Colonic mucosa (tissue), 4 donors: ENCODE measurements at regions of chr1 and their contacts with region 1.

Region 1: DNA sequence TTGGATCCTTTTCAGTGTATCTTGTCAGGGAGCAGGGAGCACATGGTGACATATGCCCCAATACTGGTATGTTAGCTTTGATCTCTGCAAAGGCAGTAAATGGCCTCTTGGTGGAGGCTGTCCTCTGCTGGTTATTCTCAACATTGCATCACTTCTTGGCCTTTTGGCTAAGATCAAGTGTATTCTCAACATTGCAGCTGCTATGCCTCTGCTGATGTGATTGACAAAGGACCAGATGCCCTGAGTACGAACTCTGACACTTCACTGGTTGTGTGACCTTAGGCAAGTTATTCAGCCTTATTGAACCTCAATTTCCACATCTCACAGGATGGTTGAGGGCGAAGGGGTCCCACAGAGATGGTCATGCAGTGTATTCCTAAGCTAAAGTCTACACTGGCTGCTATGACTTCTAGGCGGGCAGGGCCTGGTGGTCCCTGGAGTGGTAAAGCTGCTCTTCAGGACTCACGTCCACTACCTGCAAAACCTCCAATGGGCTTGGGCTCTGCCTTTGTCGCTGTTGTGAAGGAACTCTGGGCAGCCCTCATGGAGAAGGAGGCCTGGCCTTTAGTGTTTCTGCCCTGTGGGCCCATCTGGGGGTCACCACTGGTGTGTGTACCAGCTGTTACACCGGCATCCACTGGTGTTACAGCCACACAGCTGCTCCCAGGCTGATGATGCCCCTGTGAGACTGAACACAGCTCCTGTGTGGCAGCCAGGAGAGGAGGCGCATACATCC is 64.8 kb downstream of the DNTTIP2 start:
- DNase-seq: peak; percentile 69
- H3K4me3 ChIP-seq: no peak overlapping the region
- H3K27ac ChIP-seq: no peak overlapping the region
- H3K4me1 ChIP-seq: no peaks in the 10 kb centered on the region
- H3K27me3 ChIP-seq: no peaks in the 10 kb centered on the region
- CTCF ChIP-seq: peak; percentile 93

Region 2: GRCh38 chr1:93437976-93438605 is 376.1 kb before region 1 on chr1:
- intact Hi-C with region 1: loop called (anchors 5 kb)
- DNase-seq: no peak
- H3K4me3 ChIP-seq: no peak overlapping the region
- H3K27ac ChIP-seq: no peak overlapping the region
- H3K4me1 ChIP-seq: no peaks in the 10 kb centered on the region
- H3K27me3 ChIP-seq: no peaks in the 10 kb centered on the region
- CTCF ChIP-seq: peak; percentile 69